GM12878 (cell line): ENCODE measurements at regions of chr6 and their contacts with region 1.

Region 1: DNA sequence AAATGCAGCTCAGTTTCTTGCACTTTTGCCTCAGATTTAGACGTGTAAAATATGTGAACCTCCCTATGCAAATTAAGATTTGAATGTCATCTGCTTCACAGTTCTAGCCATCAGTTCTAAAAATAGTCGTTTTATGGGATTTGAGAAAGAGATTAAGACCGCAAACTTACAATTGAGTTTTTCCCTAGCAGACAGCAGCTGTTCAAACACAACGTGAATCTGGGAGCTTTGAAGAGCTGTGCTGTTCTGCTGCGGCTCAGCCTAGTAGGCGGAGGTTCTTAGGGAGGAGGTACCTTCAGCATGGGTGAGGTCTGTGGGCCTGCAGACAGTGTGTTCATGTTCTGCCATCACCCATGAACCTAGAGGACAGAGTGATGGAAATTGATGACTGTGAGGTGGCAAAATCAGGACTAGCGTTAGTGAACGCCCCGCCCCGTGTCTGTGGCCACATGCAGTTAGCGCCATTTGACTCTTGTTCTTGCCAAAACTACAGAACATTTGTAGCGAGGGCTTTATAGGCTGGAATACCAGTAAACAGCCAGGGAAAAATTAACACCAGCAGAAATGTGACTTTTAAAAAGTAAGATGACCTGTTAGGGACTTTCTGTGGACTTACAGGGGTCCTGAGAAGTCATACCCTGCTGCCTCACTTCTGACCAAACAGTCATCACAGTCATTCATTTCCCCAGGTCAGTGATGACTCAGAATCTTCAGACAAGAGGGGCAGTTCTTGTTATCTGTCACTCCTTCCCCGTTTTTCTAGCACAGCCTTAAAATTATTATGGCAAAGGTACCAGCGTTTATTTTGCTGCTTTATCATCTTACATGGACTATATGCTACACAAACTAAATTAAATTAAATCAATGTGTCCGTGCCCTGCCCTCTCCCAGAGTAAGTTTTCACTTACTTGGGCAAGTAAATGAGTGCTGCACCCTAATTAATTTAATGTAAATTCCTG is 84.3 kb upstream of the TMEM181 start:
- DNase-seq: peak; percentile 88
- ATAC-seq: peak; percentile 90
- H3K4me3 ChIP-seq: peak overlapping the region; percentile 55
- H3K27ac ChIP-seq: peak overlapping the region; percentile 81
- H3K4me1 ChIP-seq: peaks cover 31% of the 10 kb centered on the region
- H3K27me3 ChIP-seq: no peaks in the 10 kb centered on the region
- CTCF ChIP-seq: no peak
- EP300 ChIP-seq: peak; percentile 79 to 94
- POLR2A ChIP-seq: peak; percentile 79
- RAD21 ChIP-seq: no peak

Region 2: GRCh38 chr6:158290659-158291058 is 185.0 kb before region 1 on chr6:
- CTCF ChIA-PET with region 1: interaction called, 3 read pairs
- POLR2A ChIA-PET with region 1: no interaction called
- RAD21 ChIA-PET with region 1: interaction called, 5 read pairs
- SMC1A ChIA-PET with region 1: interaction called, 3 read pairs
- in situ Hi-C with region 1: no loop called
- intact Hi-C with region 1: loop called (anchors 2 kb)
- DNase-seq: peak; percentile 39
- ATAC-seq: peak; percentile 96
- H3K4me3 ChIP-seq: peak overlapping the region; percentile 55
- H3K27ac ChIP-seq: peak overlapping the region; percentile 57
- H3K4me1 ChIP-seq: peaks cover 30% of the 10 kb centered on the region
- H3K27me3 ChIP-seq: no peaks in the 10 kb centered on the region
- CTCF ChIP-seq: no peak
- EP300 ChIP-seq: no peak
- POLR2A ChIP-seq: no peak
- RAD21 ChIP-seq: no peak

Region 3: DNA sequence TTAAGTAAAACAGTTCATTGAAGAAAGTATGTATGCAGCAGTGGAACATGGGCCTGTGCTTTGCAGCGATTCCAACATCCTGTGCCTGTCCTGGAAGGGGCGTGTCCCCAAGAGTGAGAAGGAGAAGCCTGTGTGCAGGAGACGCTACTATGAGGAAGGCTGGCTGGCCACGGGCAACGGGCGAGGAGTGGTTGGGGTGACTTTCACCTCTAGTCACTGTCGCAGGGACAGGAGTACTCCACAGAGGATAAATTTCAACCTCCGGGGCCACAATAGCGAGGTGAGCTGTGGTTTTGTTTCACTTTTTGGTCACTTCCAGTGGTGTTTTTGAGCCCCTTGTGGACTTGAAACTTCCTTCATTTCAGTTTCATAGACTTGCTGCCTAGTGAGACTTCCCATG is 161.6 kb before region 1 on chr6:
- CTCF ChIA-PET with region 1: no interaction called
- POLR2A ChIA-PET with region 1: no interaction called
- RAD21 ChIA-PET with region 1: no interaction called
- SMC1A ChIA-PET with region 1: no interaction called
- in situ Hi-C with region 1: no loop called
- intact Hi-C with region 1: no loop called
- DNase-seq: no peak
- ATAC-seq: peak; percentile 86
- H3K4me3 ChIP-seq: peak overlapping the region; percentile 20; the same call in 1 of the 2 replicates
- H3K27ac ChIP-seq: peak overlapping the region; percentile 18
- H3K4me1 ChIP-seq: peaks cover 9% of the 10 kb centered on the region
- H3K27me3 ChIP-seq: no peaks in the 10 kb centered on the region
- CTCF ChIP-seq: no peak
- EP300 ChIP-seq: no peak
- POLR2A ChIP-seq: no peak
- RAD21 ChIP-seq: no peak

Region 4: DNA sequence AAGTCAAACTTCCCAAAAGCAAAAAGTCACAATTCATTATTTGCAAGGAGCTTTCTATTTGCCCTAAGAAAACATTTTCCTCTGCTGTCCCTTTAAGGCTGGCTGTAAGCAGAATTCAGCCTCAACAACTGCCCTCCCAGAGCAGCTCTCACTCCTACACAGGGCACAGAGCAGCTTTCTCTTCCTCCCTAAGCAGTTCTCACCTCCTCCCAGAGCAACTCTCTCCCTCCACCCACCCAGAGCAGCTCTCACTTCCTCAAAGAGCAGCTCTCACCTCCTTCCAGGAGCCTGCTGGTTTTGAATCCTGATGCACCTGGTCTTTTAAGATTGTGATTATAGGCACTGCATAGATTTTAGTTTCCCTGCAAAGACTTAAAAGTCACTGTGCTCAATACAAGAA is 36.4 kb before region 1 on chr6:
- CTCF ChIA-PET with region 1: interaction called, 4 read pairs
- POLR2A ChIA-PET with region 1: interaction called, 5 read pairs
- RAD21 ChIA-PET with region 1: interaction called, 17 read pairs
- SMC1A ChIA-PET with region 1: interaction called, 16 read pairs
- in situ Hi-C with region 1: no loop called
- intact Hi-C with region 1: no loop called
- DNase-seq: peak; percentile 72
- ATAC-seq: peak; percentile 99
- H3K4me3 ChIP-seq: no peak overlapping the region
- H3K27ac ChIP-seq: no peak overlapping the region
- H3K4me1 ChIP-seq: peaks cover 5% of the 10 kb centered on the region
- H3K27me3 ChIP-seq: no peaks in the 10 kb centered on the region
- CTCF ChIP-seq: no peak
- EP300 ChIP-seq: peak; percentile 65 to 81; a peak in 3 of 4 replicates
- POLR2A ChIP-seq: no peak
- RAD21 ChIP-seq: no peak

Region 5: GRCh38 chr6:158559895-158560835 is 84.5 kb after region 1 on chr6 and contains the start of gene TMEM181:
- CTCF ChIA-PET with region 1: no interaction called
- POLR2A ChIA-PET with region 1: no interaction called
- RAD21 ChIA-PET with region 1: interaction called, 5 read pairs
- SMC1A ChIA-PET with region 1: interaction called, 4 read pairs
- in situ Hi-C with region 1: no loop called
- intact Hi-C with region 1: loop called (anchors 2 kb)
- DNase-seq: peak; percentile 32
- ATAC-seq: peak; percentile 89
- H3K4me3 ChIP-seq: peak within 1 kb of the TSS; percentile 79
- H3K27ac ChIP-seq: peak within 1 kb of the TSS; percentile 69
- H3K4me1 ChIP-seq: peaks cover 12% of the 10 kb centered on the region
- H3K27me3 ChIP-seq: no peaks in the 10 kb centered on the region
- CTCF ChIP-seq: no peak
- EP300 ChIP-seq: no peak
- POLR2A ChIP-seq: peak; percentile 88
- RAD21 ChIP-seq: no peak
- polyA plus RNA-seq, gene TMEM181: 1.5 to 2.3 TPM

Region 6: DNA sequence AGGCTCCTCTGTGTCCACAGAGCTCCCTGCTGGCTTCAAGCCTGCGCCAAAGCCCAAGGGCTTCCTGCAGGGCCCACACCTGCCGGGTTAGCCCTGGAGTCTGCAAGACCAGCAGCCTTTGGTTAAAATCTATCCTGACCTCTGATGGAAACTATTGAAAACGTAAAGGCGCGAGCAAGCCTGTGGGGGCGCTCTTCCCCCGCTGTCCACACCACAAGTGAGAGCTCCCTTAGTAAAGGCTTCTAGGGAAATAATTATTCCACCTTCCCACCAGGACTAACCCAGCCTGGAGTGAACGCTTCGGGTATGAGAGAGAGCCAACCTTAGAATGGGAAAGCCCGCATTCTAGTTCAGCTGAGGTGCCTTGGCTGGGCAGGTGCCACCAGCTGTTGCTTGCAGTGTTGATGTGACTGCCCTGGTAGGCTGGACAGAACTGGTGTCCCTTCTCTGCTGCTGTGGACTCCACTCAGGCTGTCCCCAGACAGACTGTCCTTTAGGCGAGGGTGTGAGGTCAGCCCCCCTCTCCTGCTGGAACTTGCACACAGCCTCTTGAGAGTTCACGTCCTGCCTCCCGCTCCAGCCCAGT is 242.9 kb after region 1 on chr6:
- CTCF ChIA-PET with region 1: no interaction called
- POLR2A ChIA-PET with region 1: no interaction called
- RAD21 ChIA-PET with region 1: no interaction called
- SMC1A ChIA-PET with region 1: no interaction called
- in situ Hi-C with region 1: no loop called
- intact Hi-C with region 1: no loop called
- DNase-seq: no peak
- ATAC-seq: no peak
- H3K4me3 ChIP-seq: no peak overlapping the region
- H3K27ac ChIP-seq: 0 out of 2 replicates have a peak overlapping the region, but pooled peaks have one; percentile 79
- H3K4me1 ChIP-seq: peaks cover 50% of the 10 kb centered on the region
- H3K27me3 ChIP-seq: no peaks in the 10 kb centered on the region
- CTCF ChIP-seq: peak in 2 of 3 experiments; percentile 29 to 61; a peak in 4 of 6 replicates
- EP300 ChIP-seq: no peak
- POLR2A ChIP-seq: no peak
- RAD21 ChIP-seq: peak; percentile 57

Region 7: DNA sequence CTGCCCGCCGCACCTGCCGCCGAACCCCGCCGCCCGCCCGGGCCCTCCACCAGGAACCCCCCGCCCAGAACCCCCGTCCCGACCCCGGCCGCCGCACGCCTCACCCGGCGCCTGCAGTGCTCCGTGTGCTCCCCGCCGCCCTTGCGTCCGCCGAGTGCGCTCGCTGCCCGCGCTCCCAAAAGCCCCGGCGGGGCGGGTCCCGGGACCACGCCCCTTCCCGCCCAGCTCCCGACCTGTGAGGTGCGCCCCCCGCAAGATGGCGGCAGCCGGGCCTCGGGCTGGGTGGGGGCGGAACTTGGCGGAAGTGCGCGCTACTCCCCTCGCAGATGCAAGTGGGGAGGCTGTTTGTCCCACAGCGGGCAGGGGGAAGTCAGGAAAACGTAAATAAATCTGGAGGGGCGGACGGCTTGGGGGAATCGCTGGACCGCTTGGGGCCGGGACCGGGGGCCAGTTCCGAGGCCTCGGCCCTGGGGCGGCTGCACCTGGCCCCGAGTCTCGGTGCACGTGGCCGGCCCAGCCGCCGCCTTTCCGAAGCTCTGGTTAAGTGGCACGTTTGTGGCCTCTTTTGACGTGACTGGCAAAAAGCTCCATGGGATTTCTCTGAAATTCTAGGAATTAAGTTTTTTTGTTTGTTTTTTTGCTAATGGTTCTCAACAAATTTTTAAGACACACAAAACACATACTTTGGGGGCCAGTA is 343.7 kb after region 1 on chr6 and contains the start of gene EZR:
- CTCF ChIA-PET with region 1: no interaction called
- POLR2A ChIA-PET with region 1: no interaction called
- RAD21 ChIA-PET with region 1: no interaction called
- SMC1A ChIA-PET with region 1: no interaction called
- in situ Hi-C with region 1: no loop called
- intact Hi-C with region 1: loop called (anchors 10 kb)
- DNase-seq: no peak
- ATAC-seq: peak; percentile 66
- H3K4me3 ChIP-seq: peak within 1 kb of the TSS; percentile 82
- H3K27ac ChIP-seq: peak within 1 kb of the TSS; percentile 66
- H3K4me1 ChIP-seq: peaks cover 14% of the 10 kb centered on the region
- H3K27me3 ChIP-seq: no peaks in the 10 kb centered on the region
- CTCF ChIP-seq: no peak; a peak in 1 of 6 replicates
- EP300 ChIP-seq: no peak
- POLR2A ChIP-seq: peak; percentile 93
- RAD21 ChIP-seq: 0 out of 2 replicates have a peak, but pooled peaks have one; percentile 8
- polyA plus RNA-seq, gene EZR: 79.1 to 98.6 TPM